ENCODE measurements at regions of chr17 and their contacts with region 1.

Region 1: GRCh38 chr17:78013683-78014467 is 55.4 kb downstream of the TNRC6C start:
- DNase-seq: peak in 1 of 2 donors; percentile 43
- ATAC-seq: peak; percentile 73 to 80
- H3K4me3 ChIP-seq: no peak overlapping the region
- H3K27ac ChIP-seq: peak overlapping the region in 1 of 4 donors; percentile 0
- H3K4me1 ChIP-seq: peaks cover 0 to 7% of the 10 kb centered on the region in 2 donors
- H3K27me3 ChIP-seq: no peaks in the 10 kb centered on the region
- CTCF ChIP-seq: peak; percentile 68 to 83 (median 76)
- POLR2A ChIP-seq: no peak

Region 2: DNA sequence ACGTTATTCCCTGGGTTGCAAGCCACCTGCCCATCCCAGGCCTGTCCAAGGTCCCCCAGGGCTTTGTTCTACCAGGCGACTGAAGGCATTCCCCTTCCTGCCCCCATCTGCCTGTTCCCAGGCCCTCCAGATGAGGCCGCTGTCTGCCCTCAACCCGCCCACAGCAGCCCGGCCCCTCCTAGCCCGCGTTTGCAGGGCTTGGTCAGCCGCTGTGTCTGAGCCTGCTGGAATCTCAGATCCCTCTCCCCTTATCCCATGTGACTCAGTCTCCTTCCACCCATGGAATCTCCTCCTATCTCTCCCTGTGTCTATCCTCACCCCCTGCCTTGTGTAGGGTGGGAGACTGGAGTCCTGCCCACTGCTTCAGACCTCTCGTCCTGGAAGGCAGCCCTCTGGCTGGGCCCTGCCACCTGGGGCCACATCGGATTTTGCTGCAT is 241.4 kb before region 1 on chr17:
- in situ Hi-C with region 1: loop called in 2 of 4 experiments (anchors 10 to 25 kb)
- intact Hi-C with region 1: loop called (anchors 2 kb)
- DNase-seq: peak in 1 of 2 donors; percentile 20
- ATAC-seq: peak; percentile 47 to 55
- H3K4me3 ChIP-seq: no peak overlapping the region
- H3K27ac ChIP-seq: no peak overlapping the region
- H3K4me1 ChIP-seq: no peaks in the 10 kb centered on the region
- H3K27me3 ChIP-seq: no peaks in the 10 kb centered on the region
- CTCF ChIP-seq: peak; percentile 16 to 61 (median 42)
- POLR2A ChIP-seq: no peak

Region 3: DNA sequence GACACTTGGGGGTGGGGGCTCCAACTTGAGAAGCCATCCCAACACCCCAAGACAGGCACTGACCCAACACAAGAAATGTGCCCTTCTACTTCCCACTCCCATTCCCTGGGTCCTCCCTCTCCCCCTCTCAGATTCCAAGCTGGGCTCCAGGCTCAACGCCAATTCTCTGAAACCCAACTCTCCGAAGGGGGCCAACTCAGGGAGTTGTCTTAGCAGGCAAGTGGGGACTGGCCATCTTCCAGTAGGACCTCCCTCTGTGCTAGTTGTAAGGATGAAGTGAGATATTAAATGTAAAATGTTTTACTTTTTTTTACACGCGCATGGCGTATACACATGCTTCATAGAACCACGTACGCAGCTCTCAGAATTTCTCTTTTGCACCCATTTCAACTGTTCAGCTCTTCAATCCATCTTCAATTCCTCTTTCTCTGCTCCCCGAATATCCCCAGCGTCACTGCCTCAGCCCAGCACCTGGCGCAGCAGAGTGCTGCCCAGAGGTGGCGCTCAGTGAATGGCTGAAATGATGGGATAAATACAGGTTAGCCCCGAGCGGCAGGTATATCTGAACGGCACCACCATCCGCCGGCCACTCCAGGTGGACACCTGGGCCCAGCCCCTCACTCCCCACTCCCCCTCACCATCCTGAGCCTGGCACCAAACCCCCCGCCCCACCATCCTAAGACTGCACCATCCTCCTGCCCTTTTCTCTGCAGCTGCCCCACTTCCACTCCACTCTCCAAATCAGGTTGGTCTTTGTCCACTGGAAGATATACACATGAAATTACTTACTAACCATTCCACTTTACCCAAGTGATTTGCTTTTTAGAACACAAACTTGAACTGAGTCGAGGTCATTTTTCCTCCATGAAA is 99.3 kb before region 1 on chr17:
- in situ Hi-C with region 1: no loop called
- intact Hi-C with region 1: loop called (anchors 5 kb)
- DNase-seq: no peak
- ATAC-seq: no peak
- H3K4me3 ChIP-seq: no peak overlapping the region
- H3K27ac ChIP-seq: no peak overlapping the region
- H3K4me1 ChIP-seq: no peaks in the 10 kb centered on the region
- H3K27me3 ChIP-seq: peaks cover 26 to 39% (median 29%) of the 10 kb centered on the region in 3 donors
- CTCF ChIP-seq: peak in 2 of 5 experiments; percentile 13 to 20
- POLR2A ChIP-seq: no peak